ENCODE measurements at regions of chr7 and their contacts with region 1.

Region 1: GRCh38 chr7:108557191-108557590 is 12.3 kb downstream of the THAP5 start:
- DNase-seq: no peak
- ATAC-seq: no peak
- H3K4me3 ChIP-seq: no peak overlapping the region
- H3K4me3 Mint-ChIP-seq: no peak overlapping the region
- H3K27ac ChIP-seq: no peak overlapping the region
- H3K27ac Mint-ChIP-seq: peak overlapping the region; percentile 28
- H3K4me1 ChIP-seq: peaks cover 29 to 35% of the 10 kb centered on the region in 2 donors
- H3K4me1 Mint-ChIP-seq: peaks cover 45% of the 10 kb centered on the region
- H3K27me3 ChIP-seq: no peaks in the 10 kb centered on the region
- H3K27me3 Mint-ChIP-seq: no peaks in the 10 kb centered on the region
- CTCF ChIP-seq: no peak

Region 2: DNA sequence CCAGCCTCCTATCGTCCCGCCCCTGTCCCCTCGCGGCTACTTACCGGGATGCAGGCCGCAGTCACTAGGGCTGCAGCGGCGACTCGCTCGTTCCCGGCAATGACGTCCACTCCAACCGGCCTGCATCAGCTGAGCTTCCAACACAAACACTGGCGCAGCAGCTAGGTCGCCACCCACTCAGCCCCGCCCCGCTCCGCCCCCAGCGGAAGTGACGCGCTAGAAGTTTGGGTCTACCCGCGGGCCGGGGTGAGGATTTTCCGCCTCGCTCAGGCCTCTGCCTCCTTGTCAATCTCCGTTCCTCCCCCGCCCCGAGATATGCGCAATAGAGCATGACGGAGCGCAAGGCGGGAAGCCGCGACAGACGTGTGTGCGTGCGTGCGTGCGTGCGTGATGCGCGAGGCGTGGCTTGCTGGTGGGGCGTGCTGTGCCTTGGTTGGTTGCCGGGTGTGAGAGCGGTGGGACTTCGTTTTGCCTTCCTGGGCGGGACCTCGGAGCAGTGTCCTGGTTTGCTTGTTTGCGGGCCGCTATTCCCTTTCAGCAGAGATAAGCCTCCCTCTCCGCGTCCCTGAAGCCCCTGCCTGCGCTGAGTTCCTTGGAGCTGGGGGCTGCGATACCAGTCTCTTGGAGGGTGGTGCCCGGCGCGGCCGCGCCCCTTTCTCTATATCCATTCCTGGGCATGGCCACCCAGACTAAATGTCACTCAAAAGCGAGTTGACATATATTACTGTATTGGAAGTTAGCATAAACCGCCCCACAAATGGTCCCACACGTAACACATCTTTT is 31.0 kb before region 1 on chr7 and contains the start of gene PNPLA8:
- CTCF ChIA-PET with region 1: interaction called, 13 read pairs
- POLR2A ChIA-PET with region 1: interaction called, 19 read pairs
- intact Hi-C with region 1: loop called (anchors 1 kb)
- DNase-seq: peak; percentile 100
- ATAC-seq: peak; percentile 90
- H3K4me3 ChIP-seq: peak within 1 kb of the TSS; percentile 77 to 97 (median 94)
- H3K4me3 Mint-ChIP-seq: peak within 1 kb of the TSS; percentile 99
- H3K27ac ChIP-seq: peak within 1 kb of the TSS; percentile 94 to 97
- H3K27ac Mint-ChIP-seq: peak within 1 kb of the TSS; percentile 99
- H3K4me1 ChIP-seq: peaks cover 34 to 37% of the 10 kb centered on the region in 2 donors
- H3K4me1 Mint-ChIP-seq: peaks cover 46% of the 10 kb centered on the region
- H3K27me3 ChIP-seq: no peaks in the 10 kb centered on the region
- H3K27me3 Mint-ChIP-seq: no peaks in the 10 kb centered on the region
- CTCF ChIP-seq: no peak
- total RNA-seq, gene PNPLA8: 56.3 and 57.3 TPM in 2 replicates